ENCODE measurements at regions of chr19 and their contacts with region 1.

Region 1: GRCh38 chr19:19531951-19532805 is 3.5 kb downstream of the YJEFN3 start:
- DNase-seq: peak; percentile 41 to 53
- ATAC-seq: peak; percentile 54 to 84; a peak in 5 of 6 replicates
- H3K4me3 ChIP-seq: no peak overlapping the region
- H3K27ac ChIP-seq: no peak overlapping the region
- H3K4me1 ChIP-seq: no peaks in the 10 kb centered on the region
- CTCF ChIP-seq: peak; percentile 68
- EP300 ChIP-seq: no peak
- POLR2A ChIP-seq: no peak
- RAD21 ChIP-seq: peak; percentile 71 to 80

Region 2: DNA sequence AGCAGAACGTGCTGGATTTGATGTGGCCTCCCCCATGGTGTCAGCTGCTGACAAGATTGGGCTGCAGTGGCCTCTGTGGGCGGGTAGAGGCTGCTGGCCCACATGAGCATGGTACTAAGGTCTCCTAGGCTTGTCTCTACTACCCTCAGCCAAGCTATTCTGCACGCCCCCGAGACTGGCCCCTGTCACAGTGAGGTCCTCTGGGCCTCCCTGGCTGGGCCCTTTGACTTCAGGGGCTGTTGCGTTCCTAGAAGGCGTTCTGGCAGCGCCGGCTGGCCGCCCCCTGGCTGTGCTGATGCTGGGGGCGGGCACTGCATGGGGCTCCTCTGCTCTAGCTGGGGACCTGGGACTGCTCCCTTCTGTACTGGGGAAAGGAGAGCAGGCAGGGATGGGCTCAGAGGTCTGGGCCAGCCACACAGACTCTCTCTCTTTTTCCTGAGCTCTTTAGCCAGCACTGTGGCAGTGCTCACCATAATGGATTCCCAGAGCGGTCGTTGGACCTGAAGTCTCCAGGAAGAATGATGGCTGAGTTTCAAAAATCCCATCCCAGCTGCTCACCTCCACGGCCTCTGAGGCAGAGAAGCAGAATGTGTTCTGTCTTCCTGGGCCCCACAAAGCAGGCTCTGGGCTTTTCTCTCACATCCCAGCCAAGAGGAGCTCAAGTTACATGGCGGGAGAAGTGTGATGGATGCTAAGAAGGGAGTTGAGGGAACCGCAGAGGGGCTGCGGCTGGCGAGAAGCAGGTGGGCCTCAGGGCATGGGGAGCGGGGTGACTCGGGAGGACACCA is 49.2 kb before region 1 on chr19:
- CTCF ChIA-PET with region 1: no interaction called
- POLR2A ChIA-PET with region 1: no interaction called
- DNase-seq: no peak
- ATAC-seq: no peak
- H3K4me3 ChIP-seq: no peak overlapping the region
- H3K27ac ChIP-seq: no peak overlapping the region
- H3K4me1 ChIP-seq: peaks cover 3% of the 10 kb centered on the region; the same call in 2 of the 3 replicates
- CTCF ChIP-seq: no peak
- EP300 ChIP-seq: no peak
- POLR2A ChIP-seq: no peak
- RAD21 ChIP-seq: no peak

Region 3: DNA sequence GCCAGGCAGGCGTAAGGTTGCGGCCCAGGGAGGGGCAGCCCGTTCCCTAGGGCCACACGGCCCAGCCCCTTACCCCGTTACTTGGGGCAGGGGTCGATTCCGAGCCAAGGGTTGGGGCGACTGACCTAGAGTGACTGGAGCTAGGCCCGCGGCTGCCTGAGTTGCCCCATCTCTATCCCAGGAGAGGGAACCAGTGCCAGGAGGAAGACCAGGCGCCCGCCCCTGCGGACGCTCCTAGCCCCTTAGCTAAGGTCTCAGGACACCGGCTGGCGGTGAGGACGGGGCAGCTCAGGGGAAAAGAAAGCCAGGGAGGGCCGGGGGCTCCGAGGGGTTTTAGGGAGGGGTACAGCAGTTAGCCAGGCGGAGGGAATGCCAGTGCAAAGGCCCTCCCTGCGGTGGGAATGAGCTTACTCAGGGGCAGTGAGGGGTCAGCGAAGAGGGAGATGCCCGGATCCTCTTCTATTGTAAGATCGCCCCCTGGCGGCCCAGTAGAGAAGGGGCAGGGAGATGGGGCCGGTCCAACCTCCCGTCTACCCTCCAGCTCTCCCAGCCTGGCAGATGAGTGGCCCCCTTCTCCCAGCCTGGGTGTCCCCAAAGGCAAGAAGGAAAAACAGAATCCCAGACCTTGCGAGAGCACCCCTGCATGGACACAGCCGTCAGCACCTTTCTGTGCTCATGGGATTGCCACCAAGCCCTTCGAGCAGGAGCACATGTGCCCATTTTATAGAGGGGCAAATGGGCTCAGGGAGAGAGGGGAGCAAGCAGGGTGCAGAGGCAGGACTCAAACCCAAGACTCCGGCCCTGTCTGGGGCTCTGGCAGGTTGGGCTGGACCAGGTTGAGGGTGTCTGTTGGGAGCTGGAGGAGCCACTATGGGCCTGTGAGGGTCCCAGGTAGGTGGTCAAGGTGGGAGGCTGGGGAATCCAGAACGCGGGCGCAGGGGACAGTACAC is 22.2 kb after region 1 on chr19:
- CTCF ChIA-PET with region 1: interaction called, 79 read pairs
- POLR2A ChIA-PET with region 1: no interaction called
- DNase-seq: no peak
- ATAC-seq: peak in 1 of 2 experiments; percentile 73; a peak in 3 of 6 replicates
- H3K4me3 ChIP-seq: no peak overlapping the region
- H3K27ac ChIP-seq: no peak overlapping the region
- H3K4me1 ChIP-seq: no peaks in the 10 kb centered on the region
- CTCF ChIP-seq: peak; percentile 34
- EP300 ChIP-seq: no peak
- POLR2A ChIP-seq: no peak
- RAD21 ChIP-seq: peak in 1 of 2 experiments; percentile 38; a peak in 3 of 5 replicates

Region 4: DNA sequence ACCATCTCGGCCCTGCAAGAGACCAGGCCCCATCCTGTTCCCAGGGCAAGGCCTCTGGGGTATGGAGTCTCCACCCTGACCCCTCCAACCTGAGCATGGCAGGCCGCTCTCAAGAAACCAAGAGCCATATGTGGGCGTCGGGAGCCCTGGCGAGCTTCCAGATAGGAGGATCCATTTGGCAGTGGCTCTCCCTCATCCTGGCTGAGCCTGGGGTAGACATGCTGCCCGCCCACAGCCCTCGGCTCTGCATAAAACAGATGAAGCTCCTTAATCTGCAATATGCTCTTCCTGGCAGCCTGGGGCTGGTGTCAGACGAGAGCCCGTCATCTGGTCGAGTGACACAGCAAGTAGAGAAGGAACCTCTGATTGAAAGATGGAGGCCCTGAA is 125.2 kb after region 1 on chr19:
- CTCF ChIA-PET with region 1: interaction called, 17 read pairs
- POLR2A ChIA-PET with region 1: no interaction called
- DNase-seq: no peak
- ATAC-seq: no peak
- H3K4me3 ChIP-seq: no peak overlapping the region
- H3K27ac ChIP-seq: no peak overlapping the region
- H3K4me1 ChIP-seq: peaks cover 6% of the 10 kb centered on the region; the same call in 1 of the 3 replicates
- CTCF ChIP-seq: no peak
- EP300 ChIP-seq: no peak
- POLR2A ChIP-seq: no peak
- RAD21 ChIP-seq: no peak

Measured in A549 (cell line).